Activated T-helper 1 cell treated with anti-CD3 and anti-CD28 coated beads, Interleukin-12 subunit alpha, Interleukin-12 subunit beta, Interleukin-2, Interleukin-4 antibody, amounts not matched to agents 30 ng/mL and 10 ng/mL and 1 ng/mL, durations not matched to agents 14 hours and 24 hours and 36 hours (primary cell): ENCODE measurements at regions of chr14 and their contacts with region 1.

Region 1: DNA sequence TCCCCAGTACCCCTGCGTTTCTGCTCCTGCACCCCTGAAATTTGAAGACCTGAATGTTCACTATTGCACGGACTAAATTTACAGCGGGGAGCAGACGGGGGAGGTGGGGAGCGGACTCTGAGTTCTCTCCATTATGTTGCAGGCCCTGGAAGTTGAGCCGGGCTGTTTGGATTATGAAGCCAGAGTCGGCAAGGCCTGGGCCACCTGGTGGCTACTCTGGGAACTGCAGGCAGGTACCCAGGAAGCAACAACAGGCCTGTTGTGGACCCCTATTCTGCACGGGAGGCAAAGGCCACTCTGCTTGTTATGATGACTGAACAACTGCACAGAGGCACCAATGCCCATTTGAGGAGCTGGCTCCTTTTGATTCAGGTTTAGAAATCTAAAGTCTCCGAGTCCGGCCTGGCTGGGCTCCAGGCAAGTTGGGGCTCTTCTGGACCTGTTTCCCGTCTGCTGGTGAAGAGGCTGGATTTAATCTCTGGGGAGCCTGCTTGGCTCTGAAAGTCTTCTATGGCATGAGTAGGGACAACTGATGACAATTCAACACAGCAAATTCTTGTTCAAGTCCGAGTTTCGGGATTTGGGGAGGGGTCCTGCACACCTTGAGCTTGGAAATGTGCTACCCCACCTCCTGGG is 34.1 kb upstream of the FAM181A start:
- DNase-seq: peak; percentile 40
- H3K4me3 Mint-ChIP-seq: no peak overlapping the region
- H3K27ac Mint-ChIP-seq: no peak overlapping the region
- H3K4me1 Mint-ChIP-seq: no peaks in the 10 kb centered on the region
- H3K27me3 Mint-ChIP-seq: peaks cover 11% of the 10 kb centered on the region

Region 2: DNA sequence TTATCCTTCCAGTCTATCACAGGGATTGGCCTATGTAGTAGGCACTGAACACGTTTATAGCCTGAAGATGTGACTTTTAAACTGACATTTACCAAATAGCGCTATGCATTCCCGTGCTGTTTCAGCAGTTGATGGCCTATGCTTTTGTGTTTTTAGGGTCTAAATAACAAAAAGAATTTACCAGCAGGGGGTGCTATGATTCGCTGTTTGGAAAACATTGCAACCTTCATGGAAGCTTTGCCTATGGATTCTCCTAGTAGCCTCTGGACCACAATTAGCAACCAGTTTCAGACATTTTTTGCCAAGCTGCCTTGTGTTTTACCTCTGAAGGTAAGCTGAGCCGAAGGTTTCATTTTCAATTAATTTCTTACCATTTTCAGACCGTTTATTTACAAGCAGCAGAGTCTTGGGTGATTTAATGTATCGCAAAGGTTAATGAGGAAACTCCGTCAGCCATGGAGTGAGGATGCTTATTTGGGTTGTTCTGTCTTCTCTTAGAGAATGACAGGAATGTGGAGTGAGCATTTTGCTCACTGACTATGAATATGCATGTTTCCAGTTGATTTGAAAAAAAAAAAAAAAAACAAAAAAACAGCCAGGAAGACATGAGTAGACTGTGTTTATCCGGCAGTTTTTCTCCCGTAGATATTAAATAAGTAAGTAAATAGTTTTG is 237.8 kb before region 1 on chr14:
- intact Hi-C with region 1: loop called (anchors 1 kb)
- DNase-seq: no peak
- H3K4me3 Mint-ChIP-seq: no peak overlapping the region
- H3K27ac Mint-ChIP-seq: no peak overlapping the region
- H3K4me1 Mint-ChIP-seq: no peaks in the 10 kb centered on the region
- H3K27me3 Mint-ChIP-seq: peaks cover 8% of the 10 kb centered on the region

Region 3: GRCh38 chr14:93748208-93749075 is 144.6 kb before region 1 on chr14:
- intact Hi-C with region 1: loop called (anchors 10 kb)
- DNase-seq: no peak
- H3K4me3 Mint-ChIP-seq: no peak overlapping the region
- H3K27ac Mint-ChIP-seq: no peak overlapping the region
- H3K4me1 Mint-ChIP-seq: no peaks in the 10 kb centered on the region
- H3K27me3 Mint-ChIP-seq: peaks cover 3% of the 10 kb centered on the region

Region 4: DNA sequence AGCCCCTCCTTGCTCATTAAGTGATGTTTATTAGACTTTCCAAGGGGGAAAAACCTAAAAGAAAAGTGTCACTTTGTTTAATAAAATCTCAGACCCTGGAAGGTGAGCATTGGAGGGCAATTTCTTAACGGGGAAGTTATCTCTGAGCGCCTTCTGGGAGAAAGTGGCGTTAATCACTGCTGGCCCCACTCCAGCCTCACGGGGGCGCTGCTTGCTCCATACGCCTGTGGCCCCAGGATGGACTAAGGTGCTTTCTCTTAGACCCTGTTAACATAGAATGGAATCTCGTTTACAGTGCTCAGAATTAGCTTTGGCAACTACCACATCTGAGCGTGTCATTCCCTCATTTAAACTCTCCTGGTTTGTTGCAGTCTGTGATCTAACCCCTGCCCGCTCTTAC is 88.4 kb before region 1 on chr14:
- intact Hi-C with region 1: loop called (anchors 2 kb)
- DNase-seq: no peak
- H3K4me3 Mint-ChIP-seq: no peak overlapping the region
- H3K27ac Mint-ChIP-seq: no peak overlapping the region
- H3K4me1 Mint-ChIP-seq: peaks cover 7% of the 10 kb centered on the region
- H3K27me3 Mint-ChIP-seq: no peaks in the 10 kb centered on the region

Region 5: GRCh38 chr14:93834699-93835371 is 58.2 kb before region 1 on chr14:
- intact Hi-C with region 1: no loop called
- DNase-seq: no peak
- H3K4me3 Mint-ChIP-seq: no peak overlapping the region
- H3K27ac Mint-ChIP-seq: no peak overlapping the region
- H3K4me1 Mint-ChIP-seq: no peaks in the 10 kb centered on the region
- H3K27me3 Mint-ChIP-seq: no peaks in the 10 kb centered on the region

Region 6: GRCh38 chr14:94066089-94066676 is 173.1 kb after region 1 on chr14:
- intact Hi-C with region 1: no loop called
- DNase-seq: no peak
- H3K4me3 Mint-ChIP-seq: no peak overlapping the region
- H3K27ac Mint-ChIP-seq: no peak overlapping the region
- H3K4me1 Mint-ChIP-seq: peaks cover 63% of the 10 kb centered on the region
- H3K27me3 Mint-ChIP-seq: no peaks in the 10 kb centered on the region